GM12878 (cell line): ENCODE measurements at regions of chr9 and their contacts with region 1.

Region 1: DNA sequence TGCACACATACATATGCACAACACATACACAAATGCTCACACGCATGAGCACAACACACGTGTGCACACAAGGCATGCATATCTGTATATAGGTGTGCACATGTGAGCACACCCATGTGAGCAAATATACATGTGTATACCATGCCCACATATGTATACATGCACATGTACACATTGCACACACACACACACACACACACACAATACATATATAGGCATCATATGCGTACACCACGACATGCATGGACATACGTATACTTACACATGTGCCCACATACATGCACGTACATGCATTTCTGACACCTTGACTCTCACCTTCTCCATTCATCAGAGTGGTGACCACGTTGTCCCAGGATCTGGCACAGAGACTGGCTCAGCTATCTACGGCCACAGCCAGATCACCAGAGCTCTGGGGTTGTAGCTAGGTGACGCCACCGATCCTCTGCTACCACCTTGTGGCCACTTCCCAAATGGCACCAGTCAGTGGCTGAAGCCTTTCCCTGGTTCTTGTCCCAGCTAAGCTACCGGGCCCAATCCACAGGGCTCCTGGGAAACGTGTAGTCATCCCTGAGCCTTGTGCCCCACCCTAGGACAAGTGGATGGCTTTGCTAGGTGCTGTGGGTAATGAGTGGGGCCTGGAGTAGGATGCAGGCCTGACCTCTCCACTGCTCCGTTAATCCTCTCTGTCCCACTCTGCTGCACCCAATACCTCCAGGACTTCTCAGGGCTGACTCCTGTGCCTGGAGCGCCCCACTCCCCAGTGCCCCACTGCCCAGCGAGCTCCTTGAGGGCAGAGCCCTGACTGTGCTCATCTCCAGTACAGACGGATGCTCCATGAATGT is 194.4 kb downstream of the RGS3 start:
- DNase-seq: peak; percentile 39
- ATAC-seq: peak; percentile 96
- H3K4me3 ChIP-seq: no peak overlapping the region
- H3K27ac ChIP-seq: no peak overlapping the region
- H3K4me1 ChIP-seq: no peaks in the 10 kb centered on the region
- H3K27me3 ChIP-seq: 0 out of 4 replicates have a peak, but pooled peaks cover 0 to 1% of the 10 kb centered on the region in 2 experiments
- CTCF ChIP-seq: peak; percentile 95 to 98 (median 96)
- EP300 ChIP-seq: no peak
- POLR2A ChIP-seq: no peak
- RAD21 ChIP-seq: peak; percentile 95

Region 2: DNA sequence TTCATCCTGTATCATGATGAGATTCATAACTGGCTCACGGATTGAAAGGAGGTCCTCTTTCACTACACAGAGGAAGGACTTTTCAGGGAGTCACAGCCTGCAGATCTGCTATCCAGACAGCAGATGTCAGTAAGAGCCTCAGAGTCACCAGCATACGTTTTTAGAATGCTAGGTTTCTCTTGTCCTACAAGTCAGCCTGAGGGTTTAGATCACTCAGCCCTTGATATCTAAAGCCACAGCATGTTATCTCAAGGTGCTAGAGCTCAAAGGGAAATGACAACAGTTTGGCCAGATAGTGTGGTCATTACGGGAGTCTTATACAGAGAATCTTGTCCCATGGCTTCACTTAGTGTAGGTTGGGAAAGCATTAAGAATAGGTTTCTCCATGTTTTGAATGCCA is 736.4 kb before region 1 on chr9:
- CTCF ChIA-PET with region 1: no interaction called
- POLR2A ChIA-PET with region 1: no interaction called
- RAD21 ChIA-PET with region 1: no interaction called
- SMC1A ChIA-PET with region 1: interaction called, 3 read pairs
- in situ Hi-C with region 1: no loop called
- intact Hi-C with region 1: loop called (anchors 10 kb)
- DNase-seq: no peak
- ATAC-seq: peak; percentile 60
- H3K4me3 ChIP-seq: no peak overlapping the region
- H3K27ac ChIP-seq: no peak overlapping the region
- H3K4me1 ChIP-seq: no peaks in the 10 kb centered on the region
- H3K27me3 ChIP-seq: no peaks in the 10 kb centered on the region; a peak in 1 of 4 replicates
- CTCF ChIP-seq: peak; percentile 53 to 65 (median 62)
- EP300 ChIP-seq: no peak
- POLR2A ChIP-seq: no peak
- RAD21 ChIP-seq: peak; percentile 58

Region 3: DNA sequence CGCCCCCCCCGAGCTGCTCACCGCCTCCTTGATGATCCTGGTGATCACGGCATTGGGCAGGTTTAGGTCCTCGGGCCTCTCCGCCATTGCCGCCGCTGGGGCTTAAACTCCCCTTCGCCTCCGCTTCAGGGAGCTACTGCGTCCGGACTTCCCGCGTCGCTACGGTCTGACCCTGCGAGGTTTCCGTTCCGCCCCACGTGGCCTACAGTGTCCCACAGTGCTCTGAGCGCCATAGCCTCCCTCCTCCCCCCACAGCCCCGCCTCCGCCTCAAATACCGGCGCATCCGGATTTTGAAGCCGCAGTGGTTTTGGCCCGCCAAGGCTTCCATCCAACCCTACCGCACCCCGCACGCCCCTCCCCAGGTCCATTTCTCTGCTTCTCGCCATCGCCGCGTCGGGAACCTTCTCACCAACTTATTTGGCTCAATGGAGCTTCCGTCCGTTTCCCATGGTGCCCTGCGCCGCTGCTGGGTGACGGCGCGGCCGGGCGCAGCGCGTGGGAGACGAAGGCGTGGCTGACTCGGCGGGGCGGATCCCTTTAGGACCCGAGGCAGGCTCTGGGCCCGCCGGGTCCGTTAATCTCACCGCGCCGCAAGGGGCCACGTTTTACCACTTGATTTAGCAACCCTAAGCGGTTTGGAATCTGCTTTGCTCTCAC is 247.6 kb before region 1 on chr9 and contains the starts of genes C9orf43 and POLE3:
- CTCF ChIA-PET with region 1: interaction called, 71 read pairs
- POLR2A ChIA-PET with region 1: no interaction called
- RAD21 ChIA-PET with region 1: interaction called, 10 read pairs
- SMC1A ChIA-PET with region 1: interaction called, 25 read pairs
- in situ Hi-C with region 1: no loop called
- intact Hi-C with region 1: no loop called
- DNase-seq: peak; percentile 80
- ATAC-seq: peak; percentile 96
- H3K4me3 ChIP-seq: peak within 1 kb of the TSS; percentile 92
- H3K27ac ChIP-seq: peak within 1 kb of the TSS; percentile 98
- H3K4me1 ChIP-seq: peaks cover 16% of the 10 kb centered on the region; the same call in 1 of the 2 replicates
- H3K27me3 ChIP-seq: no peaks in the 10 kb centered on the region
- CTCF ChIP-seq: no peak; a peak in 1 of 6 replicates
- EP300 ChIP-seq: 0 out of 4 replicates have a peak, but pooled peaks of 1 of the 2 experiments have one; percentile 15
- POLR2A ChIP-seq: peak; percentile 90
- RAD21 ChIP-seq: no peak
- polyA plus RNA-seq, gene C9orf43: 0.23 to 0.51 TPM
- polyA plus RNA-seq, gene POLE3: 40.8 to 65.9 TPM

Region 4: GRCh38 chr9:113511856-113512761 is 145.8 kb before region 1 on chr9:
- CTCF ChIA-PET with region 1: interaction called, 112 read pairs
- POLR2A ChIA-PET with region 1: no interaction called
- RAD21 ChIA-PET with region 1: interaction called, 13 read pairs
- SMC1A ChIA-PET with region 1: interaction called, 67 read pairs
- in situ Hi-C with region 1: no loop called
- intact Hi-C with region 1: no loop called
- DNase-seq: peak; percentile 81
- ATAC-seq: peak; percentile 74
- H3K4me3 ChIP-seq: peak overlapping the region; percentile 42; the same call in 1 of the 2 replicates
- H3K27ac ChIP-seq: peak overlapping the region; percentile 68
- H3K4me1 ChIP-seq: peaks cover 41% of the 10 kb centered on the region
- H3K27me3 ChIP-seq: no peaks in the 10 kb centered on the region
- CTCF ChIP-seq: no peak
- EP300 ChIP-seq: peak; percentile 7 to 84; a peak in 2 of 4 replicates
- POLR2A ChIP-seq: no peak
- RAD21 ChIP-seq: no peak

Region 5: DNA sequence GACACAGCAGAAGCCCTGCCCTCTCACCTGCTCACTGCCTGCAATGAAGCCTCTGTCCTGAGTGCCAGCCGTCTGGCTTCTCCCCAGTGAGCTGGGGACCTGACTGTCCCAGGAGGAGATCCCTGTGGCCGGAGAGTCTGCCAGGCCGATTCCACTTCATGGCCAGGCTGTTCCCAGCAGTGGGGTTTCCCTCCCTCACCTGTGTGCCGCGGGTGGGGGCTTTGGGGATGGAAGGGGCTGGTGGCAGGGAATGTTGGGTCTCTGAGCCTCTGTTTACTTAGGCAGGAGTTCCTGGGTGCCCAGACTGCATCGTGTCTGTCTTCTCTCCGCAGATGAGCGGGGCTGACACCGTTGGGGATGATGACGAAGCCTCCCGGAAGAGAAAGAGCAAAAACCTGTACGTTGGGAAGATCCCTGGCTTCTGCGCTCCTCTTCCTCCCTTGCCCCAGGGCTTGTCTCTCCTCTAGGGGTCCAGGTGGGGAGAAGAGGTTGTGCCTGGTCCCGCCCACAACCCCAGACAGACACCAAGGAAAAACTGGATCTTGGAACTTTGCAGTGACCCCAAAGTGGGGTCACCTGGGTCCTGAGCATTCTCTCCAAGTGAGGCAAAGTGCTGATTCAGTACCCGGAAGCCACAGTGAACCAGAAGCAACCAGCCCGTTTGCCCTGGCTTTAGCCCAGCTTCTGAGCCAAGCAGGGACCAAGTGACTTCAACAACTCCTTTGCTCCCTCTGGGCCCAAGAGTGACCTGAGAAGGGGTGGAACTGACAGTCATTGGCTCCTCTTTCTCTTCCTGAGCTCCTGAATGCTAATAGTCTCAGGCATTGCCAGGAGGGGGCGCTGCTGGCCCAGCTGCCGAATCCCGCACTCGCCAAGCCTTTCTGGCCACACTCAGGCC is 66.7 kb before region 1 on chr9:
- CTCF ChIA-PET with region 1: interaction called, 565 read pairs
- POLR2A ChIA-PET with region 1: interaction called, 7 read pairs
- RAD21 ChIA-PET with region 1: interaction called, 290 read pairs
- SMC1A ChIA-PET with region 1: interaction called, 270 read pairs
- in situ Hi-C with region 1: loop called (anchors 5 kb)
- intact Hi-C with region 1: loop called (anchors 1 kb)
- DNase-seq: no peak
- ATAC-seq: peak; percentile 72
- H3K4me3 ChIP-seq: no peak overlapping the region
- H3K27ac ChIP-seq: no peak overlapping the region
- H3K4me1 ChIP-seq: peaks cover 29% of the 10 kb centered on the region
- H3K27me3 ChIP-seq: no peaks in the 10 kb centered on the region
- CTCF ChIP-seq: peak; percentile 87 to 93 (median 92)
- EP300 ChIP-seq: no peak
- POLR2A ChIP-seq: no peak
- RAD21 ChIP-seq: peak; percentile 85

Region 6: DNA sequence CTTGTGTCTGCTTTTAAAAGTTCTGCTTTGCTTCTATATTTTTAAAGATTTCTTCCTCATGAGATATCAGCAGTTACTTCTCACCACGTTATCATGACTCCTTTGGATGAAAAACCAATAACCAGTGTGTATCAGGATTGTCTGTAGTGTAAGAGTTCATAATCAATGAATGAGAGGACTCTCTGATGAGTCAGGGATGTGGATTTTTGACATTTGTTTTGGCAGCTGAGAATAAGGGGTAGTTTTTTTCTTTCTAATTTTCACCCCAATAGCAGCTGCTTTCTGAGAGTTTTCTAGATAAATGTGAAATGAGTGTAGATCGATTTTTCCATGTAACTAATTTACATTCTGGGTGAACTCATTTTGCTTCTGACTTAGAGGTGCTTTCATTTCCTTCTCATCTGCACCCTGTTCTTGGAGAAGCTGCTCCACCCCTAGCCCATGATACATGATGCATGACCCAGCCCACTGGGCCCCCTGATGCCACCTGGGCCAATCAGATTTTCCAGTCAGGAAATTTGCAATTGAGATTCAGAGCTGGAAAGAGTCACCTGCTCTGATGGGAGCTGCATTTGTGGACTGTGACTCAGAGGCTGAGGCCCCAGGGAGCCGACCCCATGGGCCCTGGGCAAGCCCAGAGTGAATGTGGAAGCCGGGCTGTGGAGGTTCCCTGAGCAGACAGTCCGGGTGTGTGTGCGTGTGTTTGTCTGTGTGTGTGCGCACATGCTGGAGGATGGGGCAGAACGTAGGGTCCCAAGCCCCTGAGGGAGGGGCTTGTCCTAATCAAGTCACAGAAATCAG is 35.1 kb before region 1 on chr9:
- CTCF ChIA-PET with region 1: interaction called, 27 read pairs
- POLR2A ChIA-PET with region 1: no interaction called
- RAD21 ChIA-PET with region 1: interaction called, 8 read pairs
- SMC1A ChIA-PET with region 1: interaction called, 5 read pairs
- in situ Hi-C with region 1: no loop called
- intact Hi-C with region 1: no loop called
- DNase-seq: peak; percentile 44
- ATAC-seq: peak; percentile 86
- H3K4me3 ChIP-seq: no peak overlapping the region
- H3K27ac ChIP-seq: no peak overlapping the region
- H3K4me1 ChIP-seq: peaks cover 5% of the 10 kb centered on the region
- H3K27me3 ChIP-seq: no peaks in the 10 kb centered on the region
- CTCF ChIP-seq: no peak
- EP300 ChIP-seq: no peak
- POLR2A ChIP-seq: 0 out of 2 replicates have a peak, but pooled peaks have one; percentile 23
- RAD21 ChIP-seq: no peak

Region 7: GRCh38 chr9:113741886-113742854 is 84.2 kb after region 1 on chr9:
- CTCF ChIA-PET with region 1: no interaction called
- POLR2A ChIA-PET with region 1: no interaction called
- RAD21 ChIA-PET with region 1: no interaction called
- SMC1A ChIA-PET with region 1: no interaction called
- in situ Hi-C with region 1: no loop called
- intact Hi-C with region 1: no loop called
- DNase-seq: no peak
- ATAC-seq: no peak
- H3K4me3 ChIP-seq: no peak overlapping the region
- H3K27ac ChIP-seq: no peak overlapping the region
- H3K4me1 ChIP-seq: no peaks in the 10 kb centered on the region
- H3K27me3 ChIP-seq: peaks cover 0 to 2% of the 10 kb centered on the region in 2 experiments; a peak in 2 of 4 replicates
- CTCF ChIP-seq: no peak
- EP300 ChIP-seq: no peak
- POLR2A ChIP-seq: no peak
- RAD21 ChIP-seq: no peak

Region 8: DNA sequence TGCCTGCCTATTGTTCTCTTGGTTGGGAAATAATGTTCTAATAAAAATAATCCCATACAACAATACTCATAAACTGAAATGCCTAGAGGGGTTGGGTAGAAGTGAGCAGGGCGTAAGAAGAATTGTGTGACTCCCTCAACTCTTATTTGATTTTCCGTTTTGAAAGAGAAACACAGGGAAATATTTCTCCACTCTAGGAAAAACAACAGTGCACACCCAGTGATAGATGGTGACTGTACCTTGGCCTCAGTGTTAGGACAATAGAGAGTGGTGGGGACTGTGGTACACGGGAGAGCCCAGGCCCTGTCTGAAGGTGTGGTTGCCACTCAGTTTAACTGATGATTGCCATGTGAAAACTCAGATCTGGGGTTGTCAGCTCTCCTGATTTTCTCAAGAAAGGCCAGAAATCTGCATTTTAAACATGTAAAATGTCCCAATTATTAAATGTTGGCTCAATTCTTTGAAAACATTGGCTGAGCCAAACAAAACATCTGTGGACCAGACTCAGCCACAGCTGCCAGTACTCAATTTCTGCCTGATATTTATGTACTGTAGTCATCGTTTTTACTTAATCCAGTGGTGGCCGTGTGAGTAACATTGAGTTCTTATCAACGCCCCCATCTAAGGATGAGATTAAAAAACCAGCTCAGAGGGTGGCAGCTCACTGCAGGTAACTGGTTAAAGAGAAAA is 114.3 kb after region 1 on chr9:
- CTCF ChIA-PET with region 1: no interaction called
- POLR2A ChIA-PET with region 1: no interaction called
- RAD21 ChIA-PET with region 1: no interaction called
- SMC1A ChIA-PET with region 1: no interaction called
- in situ Hi-C with region 1: no loop called
- intact Hi-C with region 1: no loop called
- DNase-seq: no peak
- ATAC-seq: no peak
- H3K4me3 ChIP-seq: no peak overlapping the region
- H3K27ac ChIP-seq: no peak overlapping the region
- H3K4me1 ChIP-seq: no peaks in the 10 kb centered on the region
- H3K27me3 ChIP-seq: no peaks in the 10 kb centered on the region
- CTCF ChIP-seq: no peak
- EP300 ChIP-seq: no peak
- POLR2A ChIP-seq: no peak
- RAD21 ChIP-seq: no peak